Activated CD4-positive, alpha-beta T cell treated with anti-CD3 and anti-CD28 coated beads, Interleukin-2, amount 10 ng/mL, durations not matched to agents 24 days and 14 days (primary cell): ENCODE measurements at regions of chr12 and their contacts with region 1.

Region 1: GRCh38 chr12:6825398-6826124 is 2.6 kb upstream of the P3H3 start:
- DNase-seq: peak; percentile 95
- H3K4me3 Mint-ChIP-seq: peak overlapping the region; percentile 20
- H3K27ac Mint-ChIP-seq: no peak overlapping the region
- H3K4me1 Mint-ChIP-seq: peaks cover 38% of the 10 kb centered on the region
- H3K27me3 Mint-ChIP-seq: peaks cover 50% of the 10 kb centered on the region

Region 2: GRCh38 chr12:6554168-6555017 is 271.2 kb before region 1 on chr12:
- intact Hi-C with region 1: loop called (anchors 5 kb)
- DNase-seq: peak; percentile 86
- H3K4me3 Mint-ChIP-seq: peak overlapping the region; percentile 92
- H3K27ac Mint-ChIP-seq: peak overlapping the region; percentile 81
- H3K4me1 Mint-ChIP-seq: peaks cover 39% of the 10 kb centered on the region
- H3K27me3 Mint-ChIP-seq: no peaks in the 10 kb centered on the region

Region 3: GRCh38 chr12:6613776-6614512 is 211.6 kb before region 1 on chr12:
- intact Hi-C with region 1: loop called (anchors 1 kb)
- DNase-seq: peak; percentile 69
- H3K4me3 Mint-ChIP-seq: no peak overlapping the region
- H3K27ac Mint-ChIP-seq: peak overlapping the region; percentile 39
- H3K4me1 Mint-ChIP-seq: peaks cover 34% of the 10 kb centered on the region
- H3K27me3 Mint-ChIP-seq: no peaks in the 10 kb centered on the region

Region 4: GRCh38 chr12:6735448-6736191 is 89.9 kb before region 1 on chr12:
- intact Hi-C with region 1: loop called (anchors 1 kb)
- DNase-seq: peak; percentile 80
- H3K4me3 Mint-ChIP-seq: no peak overlapping the region
- H3K27ac Mint-ChIP-seq: no peak overlapping the region
- H3K4me1 Mint-ChIP-seq: peaks cover 5% of the 10 kb centered on the region
- H3K27me3 Mint-ChIP-seq: no peaks in the 10 kb centered on the region

Region 5: GRCh38 chr12:6764011-6764828 is 61.3 kb before region 1 on chr12:
- intact Hi-C with region 1: loop called (anchors 5 kb)
- DNase-seq: peak; percentile 91
- H3K4me3 Mint-ChIP-seq: peak overlapping the region; percentile 75
- H3K27ac Mint-ChIP-seq: peak overlapping the region; percentile 70
- H3K4me1 Mint-ChIP-seq: peaks cover 36% of the 10 kb centered on the region
- H3K27me3 Mint-ChIP-seq: peaks cover 7% of the 10 kb centered on the region

Region 6: DNA sequence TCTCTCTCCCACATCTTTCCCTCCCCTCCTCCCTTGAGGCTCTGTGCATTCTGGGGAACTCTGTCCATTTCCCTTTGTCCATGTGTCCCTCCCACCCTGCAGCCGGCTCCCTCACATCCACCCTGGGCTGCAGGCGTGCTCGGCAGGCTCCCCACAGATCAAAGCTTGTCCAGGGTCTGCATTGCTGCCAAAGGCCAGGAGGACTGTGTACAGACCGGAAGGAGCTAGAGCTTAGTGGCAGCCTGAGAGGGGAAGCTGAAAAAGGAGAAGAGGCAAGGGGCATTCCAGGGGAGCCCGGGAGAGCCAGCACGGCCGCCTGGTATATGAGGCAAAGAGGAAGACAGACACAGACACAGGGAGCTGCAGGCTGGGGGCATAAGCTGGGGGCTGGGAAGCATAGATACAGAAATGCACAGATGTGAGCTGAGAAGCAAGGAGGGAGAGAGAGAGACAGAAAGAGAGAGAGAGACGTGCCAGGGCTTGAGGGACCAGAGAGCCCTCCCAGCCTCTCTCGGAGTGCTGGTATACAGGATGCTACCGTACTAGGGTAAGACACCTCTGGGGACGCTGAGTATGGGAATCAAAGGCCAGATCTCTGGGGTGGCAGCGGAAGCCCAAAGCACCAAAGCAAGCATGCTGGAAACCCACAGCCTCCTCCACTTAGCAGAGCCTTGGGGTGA is 32.9 kb before region 1 on chr12:
- intact Hi-C with region 1: loop called (anchors 5 kb)
- DNase-seq: peak; percentile 86
- H3K4me3 Mint-ChIP-seq: peak overlapping the region; percentile 97
- H3K27ac Mint-ChIP-seq: peak overlapping the region; percentile 93
- H3K4me1 Mint-ChIP-seq: peaks cover 62% of the 10 kb centered on the region
- H3K27me3 Mint-ChIP-seq: no peaks in the 10 kb centered on the region